Breast epithelium (tissue), 4 donors: ENCODE measurements at regions of chr20 and their contacts with region 1.

Region 1: GRCh38 chr20:35739294-35740163 is 2.5 kb downstream of the RBM39 start:
- DNase-seq: no peak
- H3K4me3 ChIP-seq: peak overlapping the region; percentile 79 to 87 (median 86)
- H3K27ac ChIP-seq: peak overlapping the region; percentile 0 to 100
- H3K4me1 ChIP-seq: peaks cover 2 to 18% of the 10 kb centered on the region in 2 donors
- H3K27me3 ChIP-seq: no peaks in the 10 kb centered on the region
- CTCF ChIP-seq: no peak
- POLR2A ChIP-seq: no peak

Region 2: DNA sequence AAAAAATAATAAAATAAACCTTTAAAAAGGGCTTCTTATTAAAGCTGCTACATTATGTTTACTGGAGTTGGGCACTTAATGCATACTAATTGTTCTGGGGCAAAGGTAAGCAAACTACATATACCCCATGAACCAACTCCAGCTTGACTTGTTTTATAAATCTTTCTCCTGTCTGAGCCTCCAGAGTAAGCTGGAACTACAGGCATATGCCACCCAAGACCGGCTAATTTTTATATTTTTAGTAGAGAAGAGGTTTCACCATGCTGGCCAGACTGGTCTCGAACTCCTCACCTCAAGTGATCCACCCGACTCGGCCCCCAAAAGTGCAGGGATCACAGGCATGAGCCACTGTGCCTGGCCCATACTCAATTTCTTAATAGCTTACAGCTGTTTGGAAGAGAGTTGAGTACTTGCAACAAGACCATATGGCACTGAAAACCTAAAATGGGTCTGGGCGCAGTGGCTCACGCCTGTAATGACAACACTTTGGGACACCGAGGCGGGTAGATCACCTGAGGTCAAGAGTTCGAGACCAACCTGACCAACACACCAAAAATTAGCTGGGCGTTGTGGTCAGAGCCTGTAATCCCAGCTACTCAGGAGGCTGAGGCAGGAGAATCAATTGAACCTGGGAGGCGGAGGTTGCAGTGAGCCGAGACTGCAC is 20.4 kb before region 1 on chr20:
- intact Hi-C with region 1: no loop called
- DNase-seq: no peak
- H3K4me3 ChIP-seq: no peak overlapping the region
- H3K27ac ChIP-seq: peak overlapping the region in 1 of 2 donors; percentile 35
- H3K4me1 ChIP-seq: no peaks in the 10 kb centered on the region
- H3K27me3 ChIP-seq: no peaks in the 10 kb centered on the region
- CTCF ChIP-seq: no peak
- POLR2A ChIP-seq: no peak

Region 3: DNA sequence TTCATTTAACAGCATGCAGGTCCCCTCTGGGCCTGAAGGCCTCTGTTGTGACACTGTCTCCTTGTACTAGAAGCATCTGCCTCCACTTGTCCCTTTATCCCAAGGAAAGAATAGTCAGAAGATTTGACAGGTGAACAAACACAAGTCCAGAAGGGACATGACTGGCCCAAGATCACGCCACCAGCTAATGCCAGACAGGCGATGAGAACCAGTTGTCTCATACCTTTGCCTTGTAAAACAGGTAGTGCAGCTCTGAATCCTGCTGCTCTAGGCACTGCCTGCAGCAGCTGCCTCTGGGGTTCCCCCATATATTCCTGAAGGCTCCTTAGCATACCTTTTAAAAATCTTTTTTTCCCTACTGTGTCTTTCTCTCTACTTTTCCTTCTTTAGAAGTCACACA is 189.8 kb after region 1 on chr20:
- intact Hi-C with region 1: no loop called
- DNase-seq: no peak
- H3K4me3 ChIP-seq: no peak overlapping the region
- H3K27ac ChIP-seq: no peak overlapping the region
- H3K4me1 ChIP-seq: no peaks in the 10 kb centered on the region
- H3K27me3 ChIP-seq: no peaks in the 10 kb centered on the region
- CTCF ChIP-seq: no peak
- POLR2A ChIP-seq: no peak

Region 4: GRCh38 chr20:36010825-36011224 is 271.3 kb after region 1 on chr20:
- intact Hi-C with region 1: loop called (anchors 5 kb)
- DNase-seq: no peak
- H3K4me3 ChIP-seq: no peak overlapping the region
- H3K27ac ChIP-seq: no peak overlapping the region
- H3K4me1 ChIP-seq: no peaks in the 10 kb centered on the region
- H3K27me3 ChIP-seq: no peaks in the 10 kb centered on the region
- CTCF ChIP-seq: no peak
- POLR2A ChIP-seq: no peak